ENCODE measurements at regions of chr4 and their contacts with region 1.

Region 1: GRCh38 chr4:103008875-103009729 is 10.4 kb downstream of the SLC9B1 start:
- DNase-seq: peak; percentile 62
- CTCF ChIP-seq: peak; percentile 68

Region 2: DNA sequence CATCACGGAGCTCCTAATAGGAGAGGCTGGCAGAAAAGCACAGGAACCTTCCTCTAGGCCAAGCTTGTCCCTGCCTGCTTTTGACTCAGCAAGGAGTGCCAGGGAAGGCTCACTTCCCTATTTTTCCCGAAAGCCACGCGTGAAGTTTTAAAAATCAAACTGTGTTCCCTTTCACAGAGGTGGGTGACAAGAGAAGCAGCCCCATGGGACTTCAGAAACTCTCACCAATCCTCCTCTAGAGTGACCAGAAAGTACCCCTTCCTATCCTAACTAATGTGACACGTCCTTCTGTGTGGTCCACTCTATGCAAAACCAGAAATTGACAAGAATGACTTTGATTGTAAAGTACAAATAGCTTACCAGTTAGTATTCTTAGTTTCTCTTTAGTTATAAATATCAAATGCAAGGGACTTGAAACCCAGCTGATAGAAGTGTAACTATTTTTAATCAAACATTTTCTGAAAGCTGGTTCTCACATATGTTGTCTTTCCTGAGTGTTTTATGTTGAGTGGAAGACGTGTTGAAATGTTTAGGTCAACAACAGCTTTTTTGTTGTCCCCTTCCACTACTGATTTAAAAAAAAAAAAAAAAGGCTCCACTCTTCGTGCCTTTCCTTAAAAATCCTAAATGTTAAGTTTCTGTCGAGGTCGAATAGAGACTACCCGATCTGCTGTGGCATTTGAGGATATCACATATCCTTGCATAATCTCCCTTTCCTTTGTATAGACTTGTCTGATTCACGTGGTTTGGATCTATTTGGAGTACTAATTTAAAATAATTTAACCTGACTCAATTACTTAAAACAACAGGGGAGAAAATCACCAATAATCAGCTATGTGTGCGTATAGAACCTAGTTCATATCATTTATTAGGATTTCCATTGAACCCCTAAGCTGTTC is 465.8 kb before region 1 on chr4:
- CTCF ChIA-PET with region 1: no interaction called
- POLR2A ChIA-PET with region 1: no interaction called
- DNase-seq: peak; percentile 22
- CTCF ChIP-seq: no peak

Region 3: GRCh38 chr4:103019308-103020124 is 10.4 kb after region 1 on chr4 and contains the start of gene SLC9B1:
- CTCF ChIA-PET with region 1: interaction called, 15 read pairs
- POLR2A ChIA-PET with region 1: no interaction called
- DNase-seq: peak; percentile 91
- CTCF ChIP-seq: no peak

Region 4: DNA sequence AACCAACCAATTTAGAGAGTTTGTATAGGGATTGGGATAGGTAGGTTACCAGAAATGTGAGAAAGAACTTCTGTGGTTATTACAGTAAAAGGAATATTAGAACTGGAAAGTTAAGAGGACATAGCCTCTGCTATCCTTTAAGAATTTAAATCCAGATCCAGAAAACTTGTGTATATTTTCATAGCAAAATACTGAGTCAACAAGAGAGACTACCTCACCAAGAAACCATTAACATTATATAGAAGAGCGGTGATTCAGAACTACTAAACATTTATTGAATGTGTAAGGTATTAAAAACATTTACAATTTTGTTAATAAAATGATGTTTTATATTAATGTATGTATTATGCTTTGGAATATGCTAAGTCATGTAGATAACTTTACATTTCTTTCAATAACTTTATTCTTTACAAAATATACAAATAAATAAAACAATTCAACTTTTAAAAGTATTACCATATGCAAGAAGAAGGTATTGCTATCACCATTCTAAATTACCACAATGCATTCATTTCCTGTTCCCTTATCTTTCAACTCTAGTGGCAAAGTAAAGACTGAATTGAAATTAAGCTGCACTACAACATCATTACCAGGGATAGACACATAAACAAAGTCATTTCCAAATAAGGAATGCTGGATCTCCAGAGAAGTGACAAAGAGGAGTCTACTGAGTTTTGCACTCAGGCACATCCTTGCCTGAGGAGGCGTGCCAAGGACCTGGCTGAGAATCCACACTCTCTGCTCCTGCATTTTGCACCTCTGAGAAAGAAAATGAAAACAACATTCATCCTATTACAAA is 96.7 kb after region 1 on chr4:
- CTCF ChIA-PET with region 1: no interaction called
- POLR2A ChIA-PET with region 1: no interaction called
- DNase-seq: no peak
- CTCF ChIP-seq: no peak

Measured in GM10248 (cell line).